GM12878 (cell line): ENCODE measurements at regions of chr7 and their contacts with region 1.

Region 1: GRCh38 chr7:82172017-82172416 is 271.6 kb downstream of the CACNA2D1 start:
- DNase-seq: no peak
- ATAC-seq: peak; percentile 64
- H3K4me3 ChIP-seq: no peak overlapping the region
- H3K27ac ChIP-seq: no peak overlapping the region
- H3K4me1 ChIP-seq: no peaks in the 10 kb centered on the region
- H3K27me3 ChIP-seq: no peaks in the 10 kb centered on the region
- CTCF ChIP-seq: peak in 1 of 3 experiments; percentile 5; a peak in 2 of 6 replicates
- EP300 ChIP-seq: no peak
- POLR2A ChIP-seq: no peak
- RAD21 ChIP-seq: peak; percentile 36; the same call in 1 of the 2 replicates

Region 2: GRCh38 chr7:82141427-82141826 is 30.6 kb before region 1 on chr7:
- CTCF ChIA-PET with region 1: no interaction called
- POLR2A ChIA-PET with region 1: no interaction called
- RAD21 ChIA-PET with region 1: interaction called, 3 read pairs
- SMC1A ChIA-PET with region 1: interaction called, 10 read pairs
- in situ Hi-C with region 1: no loop called
- intact Hi-C with region 1: no loop called
- DNase-seq: no peak
- ATAC-seq: peak; percentile 88
- H3K4me3 ChIP-seq: no peak overlapping the region
- H3K27ac ChIP-seq: no peak overlapping the region
- H3K4me1 ChIP-seq: no peaks in the 10 kb centered on the region
- H3K27me3 ChIP-seq: no peaks in the 10 kb centered on the region; a peak in 1 of 4 replicates
- CTCF ChIP-seq: no peak
- EP300 ChIP-seq: no peak
- POLR2A ChIP-seq: no peak
- RAD21 ChIP-seq: no peak

Region 3: GRCh38 chr7:82194016-82194643 is 22.1 kb after region 1 on chr7:
- CTCF ChIA-PET with region 1: interaction called, 3 read pairs
- POLR2A ChIA-PET with region 1: no interaction called
- RAD21 ChIA-PET with region 1: interaction called, 3 read pairs
- SMC1A ChIA-PET with region 1: interaction called, 10 read pairs
- in situ Hi-C with region 1: no loop called
- intact Hi-C with region 1: no loop called
- DNase-seq: no peak
- ATAC-seq: peak; percentile 60
- H3K4me3 ChIP-seq: no peak overlapping the region
- H3K27ac ChIP-seq: no peak overlapping the region
- H3K4me1 ChIP-seq: no peaks in the 10 kb centered on the region
- H3K27me3 ChIP-seq: no peaks in the 10 kb centered on the region
- CTCF ChIP-seq: no peak
- EP300 ChIP-seq: no peak
- POLR2A ChIP-seq: no peak
- RAD21 ChIP-seq: no peak

Region 4: GRCh38 chr7:82234457-82235049 is 62.5 kb after region 1 on chr7:
- CTCF ChIA-PET with region 1: interaction called, 6 read pairs
- POLR2A ChIA-PET with region 1: no interaction called
- RAD21 ChIA-PET with region 1: interaction called, 6 read pairs
- SMC1A ChIA-PET with region 1: interaction called, 43 read pairs
- in situ Hi-C with region 1: no loop called
- intact Hi-C with region 1: no loop called
- DNase-seq: no peak
- ATAC-seq: peak; percentile 60
- H3K4me3 ChIP-seq: no peak overlapping the region
- H3K27ac ChIP-seq: no peak overlapping the region
- H3K4me1 ChIP-seq: no peaks in the 10 kb centered on the region
- H3K27me3 ChIP-seq: no peaks in the 10 kb centered on the region
- CTCF ChIP-seq: peak; percentile 34 to 51 (median 49); a peak in 5 of 6 replicates
- EP300 ChIP-seq: no peak
- POLR2A ChIP-seq: no peak
- RAD21 ChIP-seq: peak; percentile 69